ENCODE measurements at regions of chr9 and their contacts with region 1.

Region 1: GRCh38 chr9:35116898-35117551 is 1.4 kb upstream of the ATOSB start:
- DNase-seq: peak; percentile 92
- H3K4me3 Mint-ChIP-seq: peak overlapping the region; percentile 98
- H3K27ac Mint-ChIP-seq: peak overlapping the region; percentile 91
- H3K4me1 Mint-ChIP-seq: peaks cover 43% of the 10 kb centered on the region
- H3K27me3 Mint-ChIP-seq: peaks cover 3% of the 10 kb centered on the region

Region 2: GRCh38 chr9:35168963-35169362 is 51.9 kb after region 1 on chr9:
- CTCF ChIA-PET with region 1: no interaction called
- DNase-seq: no peak
- H3K4me3 Mint-ChIP-seq: no peak overlapping the region
- H3K27ac Mint-ChIP-seq: no peak overlapping the region
- H3K4me1 Mint-ChIP-seq: no peaks in the 10 kb centered on the region
- H3K27me3 Mint-ChIP-seq: peaks cover 5% of the 10 kb centered on the region

Region 3: GRCh38 chr9:35258676-35259474 is 141.8 kb after region 1 on chr9:
- CTCF ChIA-PET with region 1: interaction called, 54 read pairs
- DNase-seq: peak; percentile 67
- H3K4me3 Mint-ChIP-seq: no peak overlapping the region
- H3K27ac Mint-ChIP-seq: no peak overlapping the region
- H3K4me1 Mint-ChIP-seq: no peaks in the 10 kb centered on the region
- H3K27me3 Mint-ChIP-seq: peaks cover 8% of the 10 kb centered on the region

Region 4: GRCh38 chr9:35481347-35481975 is 364.4 kb after region 1 on chr9:
- CTCF ChIA-PET with region 1: interaction called, 40 read pairs
- DNase-seq: peak; percentile 56
- H3K4me3 Mint-ChIP-seq: no peak overlapping the region
- H3K27ac Mint-ChIP-seq: no peak overlapping the region
- H3K4me1 Mint-ChIP-seq: no peaks in the 10 kb centered on the region
- H3K27me3 Mint-ChIP-seq: peaks cover 28% of the 10 kb centered on the region